CD4-positive, alpha-beta T cell (primary cell): ENCODE measurements at regions of chr4 and their contacts with region 1.

Region 1: DNA sequence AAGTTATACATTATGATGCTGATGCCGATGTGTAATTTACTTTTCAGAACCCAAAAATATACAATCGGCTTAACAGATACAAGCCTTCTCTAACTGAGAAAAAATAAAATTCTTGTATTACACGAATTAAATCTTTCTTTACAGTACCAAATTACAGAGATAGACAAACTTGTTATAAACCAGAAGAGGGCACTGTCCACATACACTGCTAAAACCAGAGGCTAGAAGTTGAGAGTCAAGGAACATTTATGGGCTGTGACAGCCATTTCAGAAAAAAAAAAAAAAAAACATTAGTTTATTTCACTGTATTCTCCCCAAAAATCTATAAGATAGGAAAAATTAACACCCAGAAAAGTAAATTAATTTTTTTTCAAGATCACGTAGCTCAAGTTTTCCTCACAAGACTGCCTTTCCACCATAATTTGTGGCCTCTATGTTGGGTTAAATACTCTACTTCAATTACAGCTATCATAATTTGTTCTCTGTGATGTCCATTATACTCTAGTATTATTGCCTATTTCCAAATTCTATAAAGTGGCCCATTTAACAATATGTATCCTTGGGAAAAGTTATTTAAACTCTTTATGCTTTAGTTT is 12.0 kb downstream of the EREG start:
- DNase-seq: peak in 3 of 14 experiments; percentile 55 to 68 (median 67)
- ATAC-seq: peak; percentile 86
- H3K4me3 ChIP-seq: no peak overlapping the region
- H3K4me3 Mint-ChIP-seq: no peak overlapping the region
- H3K27ac ChIP-seq: no peak overlapping the region
- H3K27ac Mint-ChIP-seq: no peak overlapping the region
- H3K4me1 ChIP-seq: no peaks in the 10 kb centered on the region
- H3K4me1 Mint-ChIP-seq: no peaks in the 10 kb centered on the region
- H3K27me3 ChIP-seq: no peaks in the 10 kb centered on the region
- H3K27me3 Mint-ChIP-seq: peaks cover 3% of the 10 kb centered on the region
- CTCF ChIP-seq: peak; percentile 79

Region 2: GRCh38 chr4:74085669-74086068 is 291.3 kb before region 1 on chr4:
- CTCF ChIA-PET with region 1: no interaction called
- POLR2A ChIA-PET with region 1: no interaction called
- intact Hi-C with region 1: no loop called
- DNase-seq: no peak
- ATAC-seq: no peak
- H3K4me3 ChIP-seq: no peak overlapping the region
- H3K4me3 Mint-ChIP-seq: no peak overlapping the region
- H3K27ac ChIP-seq: no peak overlapping the region
- H3K27ac Mint-ChIP-seq: no peak overlapping the region
- H3K4me1 ChIP-seq: no peaks in the 10 kb centered on the region
- H3K4me1 Mint-ChIP-seq: no peaks in the 10 kb centered on the region
- H3K27me3 ChIP-seq: no peaks in the 10 kb centered on the region
- H3K27me3 Mint-ChIP-seq: peaks cover 11% of the 10 kb centered on the region
- CTCF ChIP-seq: no peak

Region 3: DNA sequence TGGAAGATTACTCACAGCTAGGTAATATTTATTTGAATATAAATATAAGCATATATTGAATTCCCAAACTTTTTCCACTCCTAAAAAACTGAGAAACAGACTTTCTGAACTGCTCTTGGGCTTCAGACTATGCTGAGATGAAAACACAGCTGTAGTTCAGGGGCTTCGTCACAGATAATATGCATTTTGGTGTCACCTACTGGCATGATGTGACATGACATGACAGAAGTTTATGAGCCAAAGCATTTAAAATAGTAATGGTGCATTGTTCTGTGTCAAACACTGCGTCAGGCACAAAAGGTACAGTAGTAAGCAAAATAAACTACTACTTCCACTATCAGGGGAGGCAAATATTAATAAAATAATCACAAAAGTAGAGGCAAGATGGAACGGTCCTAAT is 246.1 kb after region 1 on chr4:
- CTCF ChIA-PET with region 1: interaction called, 3 read pairs
- POLR2A ChIA-PET with region 1: no interaction called
- intact Hi-C with region 1: loop called (anchors 1 to 2 kb)
- DNase-seq: peak in 4 of 14 experiments; percentile 24 to 58 (median 48)
- ATAC-seq: peak; percentile 79
- H3K4me3 ChIP-seq: no peak overlapping the region
- H3K4me3 Mint-ChIP-seq: peak overlapping the region; percentile 36
- H3K27ac ChIP-seq: no peak overlapping the region
- H3K27ac Mint-ChIP-seq: no peak overlapping the region
- H3K4me1 ChIP-seq: no peaks in the 10 kb centered on the region
- H3K4me1 Mint-ChIP-seq: peaks cover 34% of the 10 kb centered on the region
- H3K27me3 ChIP-seq: no peaks in the 10 kb centered on the region
- H3K27me3 Mint-ChIP-seq: no peaks in the 10 kb centered on the region
- CTCF ChIP-seq: peak; percentile 44